ENCODE measurements at regions of chr7 and their contacts with region 1.

Region 1: GRCh38 chr7:113421696-113422330 is 303.5 kb upstream of the SMIM30 start:
- DNase-seq: peak; percentile 26 to 73 (median 64)
- ATAC-seq: peak; percentile 95
- H3K4me3 ChIP-seq: no peak overlapping the region
- H3K4me3 Mint-ChIP-seq: peak overlapping the region in 7 of 10 donors; percentile 33 to 65 (median 52)
- H3K27ac ChIP-seq: no peak overlapping the region
- H3K27ac Mint-ChIP-seq: peak overlapping the region in 1 of 9 donors; percentile 72
- H3K4me1 ChIP-seq: no peaks in the 10 kb centered on the region
- H3K4me1 Mint-ChIP-seq: peaks cover 3 to 5% (median 4%) of the 10 kb centered on the region in 7 donors
- H3K27me3 ChIP-seq: no peaks in the 10 kb centered on the region
- H3K27me3 Mint-ChIP-seq: peaks cover 0 to 7% (median 3%) of the 10 kb centered on the region in 5 donors

Region 2: GRCh38 chr7:112266595-112267270 is 1155.1 kb before region 1 on chr7:
- CTCF ChIA-PET with region 1: no interaction called
- POLR2A ChIA-PET with region 1: no interaction called
- intact Hi-C with region 1: no loop called
- DNase-seq: no peak
- ATAC-seq: no peak
- H3K4me3 ChIP-seq: no peak overlapping the region
- H3K4me3 Mint-ChIP-seq: no peak overlapping the region
- H3K27ac ChIP-seq: no peak overlapping the region
- H3K27ac Mint-ChIP-seq: no peak overlapping the region
- H3K4me1 ChIP-seq: peaks cover 0 to 4% of the 10 kb centered on the region in 2 donors
- H3K4me1 Mint-ChIP-seq: peaks cover 0 to 59% (median 31%) of the 10 kb centered on the region in 7 donors
- H3K27me3 ChIP-seq: no peaks in the 10 kb centered on the region
- H3K27me3 Mint-ChIP-seq: no peaks in the 10 kb centered on the region

Region 3: GRCh38 chr7:112898432-112899290 is 523.2 kb before region 1 on chr7:
- CTCF ChIA-PET with region 1: no interaction called
- POLR2A ChIA-PET with region 1: no interaction called
- intact Hi-C with region 1: loop called (anchors 1 to 10 kb)
- DNase-seq: peak in 7 of 9 donors; percentile 4 to 30 (median 23)
- ATAC-seq: peak; percentile 81
- H3K4me3 ChIP-seq: no peak overlapping the region
- H3K4me3 Mint-ChIP-seq: no peak overlapping the region
- H3K27ac ChIP-seq: no peak overlapping the region
- H3K27ac Mint-ChIP-seq: peak overlapping the region in 1 of 9 donors; percentile 51
- H3K4me1 ChIP-seq: no peaks in the 10 kb centered on the region
- H3K4me1 Mint-ChIP-seq: peaks cover 0 to 26% (median 14%) of the 10 kb centered on the region in 7 donors
- H3K27me3 ChIP-seq: no peaks in the 10 kb centered on the region
- H3K27me3 Mint-ChIP-seq: no peaks in the 10 kb centered on the region

Region 4: GRCh38 chr7:113159746-113160339 is 262.0 kb before region 1 on chr7:
- CTCF ChIA-PET with region 1: no interaction called
- POLR2A ChIA-PET with region 1: no interaction called
- intact Hi-C with region 1: loop called in 1 of 2 experiments (anchors 1 kb)
- DNase-seq: no peak
- ATAC-seq: no peak
- H3K4me3 ChIP-seq: no peak overlapping the region
- H3K4me3 Mint-ChIP-seq: no peak overlapping the region
- H3K27ac ChIP-seq: no peak overlapping the region
- H3K27ac Mint-ChIP-seq: no peak overlapping the region
- H3K4me1 ChIP-seq: no peaks in the 10 kb centered on the region
- H3K4me1 Mint-ChIP-seq: no peaks in the 10 kb centered on the region
- H3K27me3 ChIP-seq: no peaks in the 10 kb centered on the region
- H3K27me3 Mint-ChIP-seq: peaks cover 2 to 15% (median 8%) of the 10 kb centered on the region in 5 donors